ENCODE measurements at regions of chr9 and their contacts with region 1.

Region 1: DNA sequence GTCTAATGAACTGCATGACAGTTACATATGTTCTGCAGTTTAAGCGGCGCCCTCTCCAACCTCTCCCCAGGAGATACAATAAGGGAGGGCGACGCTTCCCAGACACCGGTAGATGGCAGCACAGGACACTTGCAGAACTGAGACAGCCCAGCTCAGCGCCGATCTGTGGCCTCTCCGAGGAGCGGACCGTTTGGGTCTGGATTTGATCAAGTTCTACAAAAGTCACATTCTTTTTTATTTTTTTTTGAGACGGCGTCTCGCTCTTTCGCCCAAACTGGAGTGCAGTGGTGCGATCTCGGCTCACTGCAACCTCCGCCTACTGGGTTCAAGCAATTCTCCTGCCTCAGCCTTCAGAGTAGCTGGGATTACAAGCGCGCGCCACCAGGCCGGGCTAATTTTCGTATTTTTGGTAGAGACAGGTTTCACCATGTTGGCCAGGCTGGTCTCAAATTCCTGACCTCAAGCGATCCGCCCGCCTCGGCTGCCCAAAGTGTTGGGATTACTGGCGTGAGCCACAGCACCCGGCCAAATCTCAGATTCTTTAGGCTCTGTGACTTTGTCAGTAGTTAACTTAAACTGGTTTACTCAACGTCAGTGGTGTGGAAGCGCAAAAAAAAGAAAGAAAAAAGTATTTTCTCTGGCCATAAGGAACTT is 1.4 kb upstream of the ATOSB start:
- DNase-seq: peak; percentile 97

Region 2: DNA sequence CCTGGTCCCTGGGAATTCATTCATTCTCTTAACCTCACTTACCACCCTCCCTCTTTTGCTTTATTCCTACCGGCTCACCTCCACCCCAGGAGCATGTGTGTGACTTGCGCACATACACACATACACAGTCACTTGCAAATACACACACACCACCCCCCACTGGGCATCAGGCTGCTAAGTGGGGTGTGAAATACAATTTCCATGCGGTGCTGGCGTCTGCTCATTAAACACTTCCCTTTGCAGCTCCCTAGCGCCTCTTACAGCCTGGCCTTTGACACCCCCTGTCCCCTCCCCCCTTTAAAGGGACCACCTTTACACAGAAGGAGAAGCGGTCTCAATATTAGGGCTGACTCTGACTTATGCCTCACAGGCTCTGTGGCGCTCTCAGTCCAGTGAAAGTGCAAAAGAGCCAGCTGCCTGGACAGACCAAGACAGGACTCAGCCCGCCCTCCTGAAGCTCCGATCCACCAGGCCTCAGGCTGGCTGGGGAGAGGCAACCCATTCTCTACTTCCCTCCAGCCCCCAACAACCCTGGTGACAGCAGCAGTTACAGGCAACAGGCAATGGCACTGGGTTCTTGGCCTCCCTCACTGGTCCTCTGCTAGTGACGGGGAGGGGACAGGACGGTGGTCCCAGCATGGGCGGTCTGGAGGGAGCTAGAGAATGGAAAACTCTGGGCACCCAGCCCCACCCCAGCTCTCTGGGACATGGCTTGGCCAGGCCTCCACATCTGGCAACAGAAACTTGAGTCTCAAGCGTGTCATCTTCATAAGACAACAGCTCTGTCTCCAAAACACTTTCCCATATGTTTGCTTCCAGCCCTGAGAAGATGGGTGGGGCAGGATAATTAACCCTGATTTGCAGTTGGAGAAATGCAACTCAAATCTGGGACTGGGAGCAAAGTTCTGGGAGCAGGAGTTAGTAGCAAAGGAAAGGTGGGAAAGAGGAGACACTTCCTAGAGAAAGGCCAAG is 606.2 kb before region 1 on chr9:
- intact Hi-C with region 1: no loop called
- DNase-seq: peak; percentile 72

Region 3: DNA sequence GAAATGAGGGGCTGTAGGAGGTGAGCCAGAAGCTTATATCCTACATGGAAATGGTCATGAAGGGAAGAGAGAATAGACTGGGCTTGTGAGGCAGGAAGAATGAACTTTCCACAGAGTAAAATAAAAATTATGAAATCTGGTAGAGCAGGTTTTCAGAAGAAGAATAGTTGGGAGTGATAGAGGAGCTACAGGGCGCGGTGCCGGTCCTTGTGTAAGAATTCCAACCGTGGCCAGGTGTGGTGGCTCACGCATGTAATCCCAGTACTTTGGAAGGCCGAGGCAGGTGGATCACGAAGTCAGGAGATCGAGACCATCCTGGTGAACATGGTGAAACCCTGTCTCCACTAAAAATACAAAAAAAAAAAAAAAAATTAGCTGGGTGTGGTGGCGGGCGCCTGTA is 35.9 kb after region 1 on chr9:
- intact Hi-C with region 1: no loop called
- DNase-seq: no peak

Region 4: GRCh38 chr9:35258676-35259474 is 141.8 kb after region 1 on chr9:
- intact Hi-C with region 1: loop called (anchors 5 kb)
- DNase-seq: peak; percentile 90

Region 5: GRCh38 chr9:35470894-35471293 is 353.9 kb after region 1 on chr9:
- intact Hi-C with region 1: loop called (anchors 5 to 10 kb)
- DNase-seq: no peak

Region 6: GRCh38 chr9:35476596-35476995 is 359.6 kb after region 1 on chr9:
- intact Hi-C with region 1: loop called (anchors 5 to 10 kb)
- DNase-seq: no peak

Region 7: GRCh38 chr9:35553670-35554543 is 436.9 kb after region 1 on chr9:
- intact Hi-C with region 1: loop called in 1 of 2 experiments (anchors 10 kb)
- DNase-seq: no peak

Measured in posterior vena cava (tissue), 2 donors.